ENCODE measurements at regions of chr1 and their contacts with region 1.

Region 1: DNA sequence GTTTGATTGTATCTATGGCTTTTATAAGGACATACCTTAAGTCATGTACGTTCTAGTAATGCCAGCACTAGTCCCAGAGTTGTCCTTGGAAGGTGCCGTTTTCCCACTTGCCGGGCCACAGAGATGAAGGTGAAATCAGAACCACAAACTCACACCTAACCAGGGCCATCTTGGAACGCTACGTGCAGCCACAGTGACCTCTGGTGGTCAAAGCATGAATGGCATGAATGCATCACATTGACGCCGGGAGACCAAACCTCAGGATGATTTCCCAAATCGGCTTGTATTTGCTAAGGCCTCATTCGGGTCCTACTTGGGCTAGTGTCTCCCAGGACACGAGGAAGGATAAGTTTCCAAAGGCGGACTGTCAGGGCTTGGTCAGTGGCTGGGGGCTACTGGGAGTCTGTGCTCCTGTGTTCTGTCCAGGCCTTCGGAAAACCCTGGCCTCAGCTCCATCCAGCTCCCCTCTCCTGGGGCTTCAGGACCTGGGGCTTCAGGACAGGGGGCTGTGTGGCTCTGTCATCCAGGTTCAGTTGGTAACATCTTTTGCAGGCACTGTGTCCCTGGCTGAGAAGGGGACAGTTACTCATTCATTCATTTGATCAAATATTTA is 260.5 kb downstream of the PRDM2 start:
- DNase-seq: peak; percentile 76

Region 2: GRCh38 chr1:13828454-13829151 is 131.9 kb before region 1 on chr1:
- CTCF ChIA-PET with region 1: interaction called, 16 read pairs
- POLR2A ChIA-PET with region 1: no interaction called
- DNase-seq: peak; percentile 72

Region 3: DNA sequence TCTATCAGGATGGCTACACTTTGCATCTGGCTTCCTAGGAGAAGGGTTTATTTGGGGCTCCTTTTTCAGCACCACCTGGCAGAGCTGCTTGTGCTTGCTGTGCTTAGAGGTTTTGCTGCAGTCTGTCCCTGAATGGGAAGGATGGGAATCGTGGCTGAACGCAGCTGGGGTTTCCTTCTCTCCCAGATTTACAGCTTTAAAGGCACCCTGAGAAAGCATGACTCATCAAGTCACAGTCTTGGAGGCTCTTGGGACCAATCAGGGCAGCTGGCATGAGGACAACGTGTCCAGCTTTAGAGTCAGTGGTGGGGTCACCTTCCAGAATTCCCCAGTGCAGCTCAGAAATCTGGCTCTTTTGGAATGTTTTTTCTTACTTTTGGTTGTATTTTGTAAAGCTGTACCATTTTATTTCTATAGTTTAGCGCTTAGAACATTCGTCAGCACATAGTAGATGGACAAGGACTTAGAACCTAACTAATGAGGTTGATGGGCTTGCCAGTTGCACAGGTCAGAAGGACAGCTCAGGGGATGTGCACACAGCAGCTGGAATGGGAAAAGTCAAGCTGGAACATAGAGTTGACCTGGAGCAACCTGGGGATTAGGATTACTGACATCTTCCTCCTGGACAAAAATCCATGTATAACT is 37.9 kb before region 1 on chr1:
- CTCF ChIA-PET with region 1: no interaction called
- POLR2A ChIA-PET with region 1: no interaction called
- DNase-seq: no peak

Region 4: DNA sequence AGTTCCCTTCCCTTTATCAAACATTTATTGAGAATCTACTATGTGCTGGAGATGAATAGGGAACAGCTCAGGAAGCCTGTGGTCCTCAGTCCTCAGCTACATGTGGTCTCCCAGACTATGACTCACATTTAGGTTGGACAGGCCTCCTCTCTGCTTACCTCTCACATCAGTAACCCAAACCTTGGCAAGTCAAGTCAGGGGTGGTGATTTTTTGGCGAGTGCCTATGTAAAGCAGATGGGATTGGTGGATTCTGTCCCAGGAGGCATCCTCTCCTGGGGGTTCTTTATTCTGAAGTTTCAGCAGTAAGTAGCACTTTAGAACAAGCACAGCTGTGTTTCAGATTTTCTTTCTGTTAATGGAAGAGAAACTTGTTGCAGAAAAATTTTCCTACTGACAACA is 19.2 kb before region 1 on chr1:
- CTCF ChIA-PET with region 1: no interaction called
- POLR2A ChIA-PET with region 1: no interaction called
- DNase-seq: no peak

Region 5: DNA sequence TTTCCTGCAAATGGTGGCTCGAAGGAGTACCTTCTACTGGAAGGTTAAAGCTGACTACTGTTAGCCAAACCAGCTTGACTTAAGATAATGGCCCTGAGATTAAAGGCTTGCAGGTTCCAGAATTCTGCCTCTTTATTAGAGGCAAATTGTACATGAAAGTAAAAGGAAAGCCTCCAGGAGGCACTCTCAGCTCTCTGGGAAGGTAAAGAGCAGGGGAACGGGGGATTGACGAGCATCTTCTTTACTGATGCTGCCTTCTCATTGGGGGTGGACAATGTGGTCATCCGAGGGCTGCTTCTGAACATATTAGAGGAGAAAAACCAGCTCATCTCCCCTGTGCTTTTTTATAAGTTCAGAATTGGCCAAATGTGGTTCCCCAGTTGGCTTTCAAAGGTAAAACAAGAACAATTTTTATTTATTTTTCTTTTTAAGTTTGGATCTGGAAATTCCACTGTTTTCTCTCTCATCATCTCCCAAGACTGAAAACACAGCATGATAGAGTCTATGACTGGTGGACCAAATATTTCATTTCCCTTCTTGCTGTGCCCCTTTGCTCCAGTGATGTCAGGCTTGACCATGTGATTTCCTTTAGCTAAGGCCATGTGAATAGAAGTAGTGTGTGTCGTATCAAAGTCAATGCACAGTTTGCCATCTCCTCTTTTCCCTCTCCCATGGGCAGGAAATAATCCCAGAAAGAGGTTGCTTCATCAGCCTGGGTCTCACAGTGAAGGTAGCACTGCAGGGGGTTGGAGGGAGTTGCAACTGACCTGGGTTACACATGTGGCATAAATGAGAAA is 32.2 kb after region 1 on chr1:
- CTCF ChIA-PET with region 1: no interaction called
- POLR2A ChIA-PET with region 1: no interaction called
- DNase-seq: no peak

Measured in HEK293T (cell line).